Posterior vena cava (tissue), 2 donors: ENCODE measurements at regions of chr17 and their contacts with region 1.

Region 1: DNA sequence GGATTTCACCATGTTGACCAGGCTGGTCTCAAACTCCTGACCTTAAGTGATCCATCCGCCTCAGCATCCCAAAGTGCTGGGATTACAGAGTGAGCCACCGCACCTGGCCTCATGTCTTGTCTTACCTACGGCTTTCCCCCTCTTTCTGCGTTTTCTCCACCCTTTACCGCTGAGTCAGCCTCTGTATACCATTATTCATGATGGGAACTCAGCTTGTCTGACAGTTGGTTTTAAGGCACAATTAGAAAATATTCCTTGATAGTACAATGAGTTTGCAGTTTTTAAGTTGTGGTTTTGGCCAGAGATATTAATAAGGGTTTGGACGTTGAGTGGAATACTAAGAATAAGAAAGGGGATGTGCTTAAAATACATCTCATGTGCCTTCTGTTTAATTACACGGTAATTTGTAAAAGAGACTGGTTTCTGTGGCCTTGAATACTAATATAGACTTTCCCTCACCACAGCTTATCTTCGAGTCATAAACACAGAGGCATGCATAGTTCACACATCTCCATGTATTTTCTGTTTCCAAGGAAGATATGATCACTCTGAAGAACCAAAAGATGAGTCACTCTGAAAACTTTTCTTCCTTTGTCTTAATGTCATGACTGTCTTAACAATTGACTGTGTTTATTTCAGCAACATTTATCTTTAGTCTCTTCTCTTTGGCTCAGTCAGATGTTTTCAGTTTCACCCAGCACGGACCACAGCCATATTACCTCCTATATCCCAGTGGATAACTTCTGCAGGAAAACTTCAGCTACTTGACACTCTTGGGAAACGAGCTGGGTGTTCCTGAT is 54.4 kb downstream of the PITPNC1 start:
- DNase-seq: no peak

Region 2: GRCh38 chr17:67221062-67221998 is 210.1 kb before region 1 on chr17:
- intact Hi-C with region 1: no loop called
- DNase-seq: no peak

Region 3: GRCh38 chr17:67456889-67457288 is 25.4 kb after region 1 on chr17:
- intact Hi-C with region 1: loop called in 1 of 2 experiments (anchors 1 kb)
- DNase-seq: no peak